Activated CD4-positive, alpha-beta T cell treated with anti-CD3 and anti-CD28 coated beads, Interleukin-2, amount 10 ng/mL, durations not matched to agents 24 days and 14 days (primary cell): ENCODE measurements at regions of chr10 and their contacts with region 1.

Region 1: GRCh38 chr10:79347226-79347893 is at the start of gene PPIF:
- DNase-seq: peak; percentile 99
- H3K4me3 Mint-ChIP-seq: peak within 1 kb of the TSS; percentile 93
- H3K27ac Mint-ChIP-seq: peak within 1 kb of the TSS; percentile 94
- H3K4me1 Mint-ChIP-seq: peaks cover 47% of the 10 kb centered on the region
- H3K27me3 Mint-ChIP-seq: no peaks in the 10 kb centered on the region
- total RNA-seq, gene PPIF: 157 and 161 TPM in 2 replicates

Region 2: DNA sequence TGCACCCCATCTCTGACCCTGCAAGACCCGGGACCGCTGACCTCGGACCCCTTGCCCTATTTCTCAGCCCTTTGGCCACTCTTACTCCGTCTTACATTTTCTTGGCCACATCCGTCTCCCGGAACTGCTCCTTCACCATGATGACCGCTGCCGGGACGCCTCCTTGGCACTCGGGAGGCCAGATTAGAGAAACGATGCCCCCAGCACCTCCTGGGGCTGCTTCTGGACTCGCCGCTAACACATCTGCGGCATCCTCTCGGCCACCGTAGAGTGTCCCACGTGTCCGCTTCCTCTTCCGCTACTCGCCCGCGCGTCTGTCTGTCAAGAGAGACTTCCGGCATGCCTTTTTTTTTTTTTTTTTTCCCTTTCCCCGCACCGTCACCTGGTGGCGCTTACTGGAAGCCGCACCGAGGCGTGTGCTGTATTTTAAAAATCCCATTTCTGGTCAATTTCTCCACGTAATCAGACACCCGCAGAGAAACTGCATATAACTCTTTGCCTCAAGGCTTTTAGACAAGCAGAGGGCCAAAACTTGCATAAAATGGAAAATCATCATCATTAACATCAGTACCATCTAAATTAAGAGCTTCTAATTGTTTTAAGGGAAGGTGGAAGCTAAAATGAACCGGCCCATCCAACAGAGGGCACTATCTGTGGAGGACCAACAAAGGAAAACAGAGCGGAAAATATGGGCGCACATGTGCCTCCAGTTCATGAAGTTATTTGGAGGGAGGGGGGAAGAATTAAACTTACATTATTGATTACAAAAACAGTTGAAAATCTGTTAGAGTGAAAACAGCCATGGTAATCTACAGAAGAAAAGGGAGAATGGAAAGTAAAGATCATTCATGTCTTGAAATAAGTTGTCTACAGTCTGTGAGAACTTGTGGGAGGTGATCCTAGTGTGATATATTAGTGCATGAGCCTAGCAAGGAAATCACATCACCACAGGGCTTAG is 1317.8 kb before region 1 on chr10 and contains the start of gene POLR3A:
- intact Hi-C with region 1: loop called (anchors 5 kb)
- DNase-seq: peak; percentile 97
- H3K4me3 Mint-ChIP-seq: peak within 1 kb of the TSS; percentile 99
- H3K27ac Mint-ChIP-seq: peak within 1 kb of the TSS; percentile 95
- H3K4me1 Mint-ChIP-seq: peaks cover 24% of the 10 kb centered on the region
- H3K27me3 Mint-ChIP-seq: no peaks in the 10 kb centered on the region
- total RNA-seq, gene POLR3A: 27.8 and 28.7 TPM in 2 replicates

Region 3: DNA sequence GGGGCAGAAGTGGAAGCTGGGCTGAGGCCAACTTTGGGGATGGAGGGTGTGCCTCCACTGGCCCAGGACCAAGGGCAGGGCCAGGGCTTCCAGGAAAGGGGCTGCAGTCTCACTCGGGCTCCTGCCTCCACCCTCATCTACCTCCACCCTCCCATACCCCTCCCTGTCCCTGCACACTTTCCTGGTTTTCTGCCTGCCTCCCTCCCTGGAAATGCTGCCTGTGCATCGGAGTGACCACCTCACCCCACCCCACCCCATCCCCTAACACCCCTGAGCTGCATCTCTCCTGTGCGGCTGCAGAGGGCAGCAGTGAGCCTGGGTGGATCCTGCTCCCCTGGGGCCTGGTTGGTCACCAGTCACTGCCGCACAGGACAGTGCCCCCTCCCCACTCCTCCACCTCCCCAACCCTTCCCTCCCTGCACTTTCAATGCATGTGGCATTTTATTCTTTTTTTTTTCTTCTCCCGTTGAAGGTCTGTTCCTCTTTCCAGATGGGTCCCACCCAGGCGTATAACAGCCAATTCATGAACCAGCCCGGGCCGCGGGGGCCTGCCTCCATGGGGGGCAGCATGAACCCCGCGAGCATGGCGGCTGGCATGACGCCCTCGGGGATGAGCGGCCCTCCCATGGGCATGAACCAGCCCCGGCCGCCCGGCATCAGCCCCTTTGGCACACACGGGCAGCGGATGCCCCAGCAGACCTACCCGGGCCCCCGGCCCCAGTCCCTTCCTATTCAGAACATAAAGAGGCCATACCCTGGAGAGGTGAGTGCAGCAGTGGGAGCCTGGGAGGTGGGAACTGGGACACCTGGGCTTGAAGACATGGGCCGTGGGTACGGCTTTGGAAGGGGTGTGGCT is 54.2 kb before region 1 on chr10:
- intact Hi-C with region 1: loop called (anchors 2 kb)
- DNase-seq: peak; percentile 79
- H3K4me3 Mint-ChIP-seq: no peak overlapping the region
- H3K27ac Mint-ChIP-seq: no peak overlapping the region
- H3K4me1 Mint-ChIP-seq: peaks cover 38% of the 10 kb centered on the region
- H3K27me3 Mint-ChIP-seq: no peaks in the 10 kb centered on the region

Region 4: GRCh38 chr10:79316671-79317431 is 30.5 kb before region 1 on chr10:
- intact Hi-C with region 1: loop called (anchors 1 kb)
- DNase-seq: peak; percentile 75
- H3K4me3 Mint-ChIP-seq: peak overlapping the region; percentile 76
- H3K27ac Mint-ChIP-seq: peak overlapping the region; percentile 90
- H3K4me1 Mint-ChIP-seq: peaks cover 59% of the 10 kb centered on the region
- H3K27me3 Mint-ChIP-seq: peaks cover 3% of the 10 kb centered on the region

Region 5: DNA sequence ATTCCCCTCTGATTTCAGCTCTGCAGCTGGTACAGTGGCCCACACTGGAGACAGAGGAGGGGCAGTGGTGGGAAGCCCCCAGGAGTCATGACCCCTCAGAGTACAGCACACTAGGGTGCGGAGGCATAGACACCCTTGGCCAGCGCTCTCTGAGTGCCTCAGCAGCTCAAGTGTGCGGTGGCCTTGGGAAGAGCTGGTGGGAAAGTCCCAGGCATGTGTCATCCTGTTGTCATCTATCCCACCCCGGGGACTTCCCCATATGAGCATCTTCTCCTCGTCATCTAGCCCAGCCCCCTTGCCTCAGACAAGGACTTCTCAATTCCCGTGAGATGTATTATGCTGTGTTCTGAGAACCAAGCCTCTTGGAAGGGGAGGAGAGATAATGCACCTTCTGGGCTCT is 15.7 kb before region 1 on chr10:
- intact Hi-C with region 1: loop called (anchors 1 kb)
- DNase-seq: peak; percentile 95
- H3K4me3 Mint-ChIP-seq: peak overlapping the region; percentile 56
- H3K27ac Mint-ChIP-seq: peak overlapping the region; percentile 95
- H3K4me1 Mint-ChIP-seq: peaks cover 57% of the 10 kb centered on the region
- H3K27me3 Mint-ChIP-seq: no peaks in the 10 kb centered on the region

Region 6: GRCh38 chr10:79445141-79445976 is 98.0 kb after region 1 on chr10 and contains the start of gene ZCCHC24:
- intact Hi-C with region 1: loop called (anchors 2 kb)
- DNase-seq: peak; percentile 98
- H3K4me3 Mint-ChIP-seq: peak within 1 kb of the TSS; percentile 86
- H3K27ac Mint-ChIP-seq: peak within 1 kb of the TSS; percentile 66
- H3K4me1 Mint-ChIP-seq: peaks cover 22% of the 10 kb centered on the region
- H3K27me3 Mint-ChIP-seq: peaks cover 44% of the 10 kb centered on the region
- total RNA-seq, gene ZCCHC24: 0.66 and 1.4 TPM in 2 replicates

Region 7: DNA sequence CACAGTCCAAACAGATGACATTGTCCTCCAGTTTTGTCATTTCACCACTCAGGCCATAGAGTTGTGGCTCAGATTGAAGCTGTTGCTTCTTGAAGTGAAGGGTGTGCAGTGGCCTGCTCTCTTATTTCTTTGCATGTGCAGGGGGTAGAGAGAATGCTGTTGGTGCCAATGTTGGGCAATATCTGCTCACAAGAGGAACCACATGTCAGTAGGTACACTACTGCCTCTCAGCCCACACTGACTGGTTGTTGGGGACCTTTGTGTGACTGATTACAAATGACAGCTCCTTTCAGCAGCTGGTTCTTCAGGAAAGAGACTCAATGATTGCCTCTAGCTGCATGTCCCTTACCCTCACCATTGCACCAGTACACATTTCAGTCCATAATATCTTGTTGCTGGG is 241.4 kb after region 1 on chr10:
- intact Hi-C with region 1: no loop called
- DNase-seq: no peak
- H3K4me3 Mint-ChIP-seq: no peak overlapping the region
- H3K27ac Mint-ChIP-seq: no peak overlapping the region
- H3K4me1 Mint-ChIP-seq: no peaks in the 10 kb centered on the region
- H3K27me3 Mint-ChIP-seq: peaks cover 36% of the 10 kb centered on the region